ENCODE measurements at regions of chrX and their contacts with region 1.

Region 1: DNA sequence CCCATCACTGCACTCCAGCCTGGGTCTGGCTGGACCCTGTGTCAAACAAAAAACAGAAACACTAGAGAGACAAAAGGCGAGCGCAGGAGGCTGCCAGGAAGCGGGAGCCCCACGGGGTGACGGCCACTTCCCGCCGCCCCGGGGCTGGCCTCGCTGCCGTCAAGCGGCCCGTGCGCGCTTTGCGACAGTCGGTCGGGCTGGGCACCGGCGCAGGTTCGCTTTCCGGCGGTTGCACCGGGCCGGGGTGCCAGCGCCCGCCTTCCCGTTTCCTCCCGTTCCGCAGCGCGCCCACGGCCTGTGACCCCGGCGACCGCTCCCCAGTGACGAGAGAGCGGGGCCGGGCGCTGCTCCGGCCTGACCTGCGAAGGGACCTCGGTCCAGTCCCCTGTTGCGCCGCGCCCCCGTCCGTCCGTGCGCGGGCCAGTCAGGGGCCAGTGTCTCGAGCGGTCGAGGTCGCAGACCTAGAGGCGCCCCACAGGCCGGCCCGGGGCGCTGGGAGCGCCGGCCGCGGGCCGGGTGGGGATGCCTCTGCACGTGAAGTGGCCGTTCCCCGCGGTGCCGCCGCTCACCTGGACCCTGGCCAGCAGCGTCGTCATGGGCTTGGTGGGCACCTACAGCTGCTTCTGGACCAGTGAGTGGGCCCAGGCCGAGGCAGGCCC is at the start of gene TAFAZZIN:
- H3K4me3 ChIP-seq: peak within 1 kb of the TSS; percentile 57
- H3K27ac ChIP-seq: peak within 1 kb of the TSS; percentile 92
- H3K4me1 ChIP-seq: no peaks in the 10 kb centered on the region; the same call in 1 of the 2 replicates
- CTCF ChIP-seq: no peak; the same call in 1 of the 2 replicates

Region 2: GRCh38 chrX:153924149-153924861 is 487.1 kb before region 1 on chrX:
- CTCF ChIA-PET with region 1: no interaction called
- POLR2A ChIA-PET with region 1: no interaction called
- H3K4me3 ChIP-seq: no peak overlapping the region
- H3K27ac ChIP-seq: no peak overlapping the region
- H3K4me1 ChIP-seq: peaks cover 9% of the 10 kb centered on the region
- CTCF ChIP-seq: peak; percentile 80

Region 3: DNA sequence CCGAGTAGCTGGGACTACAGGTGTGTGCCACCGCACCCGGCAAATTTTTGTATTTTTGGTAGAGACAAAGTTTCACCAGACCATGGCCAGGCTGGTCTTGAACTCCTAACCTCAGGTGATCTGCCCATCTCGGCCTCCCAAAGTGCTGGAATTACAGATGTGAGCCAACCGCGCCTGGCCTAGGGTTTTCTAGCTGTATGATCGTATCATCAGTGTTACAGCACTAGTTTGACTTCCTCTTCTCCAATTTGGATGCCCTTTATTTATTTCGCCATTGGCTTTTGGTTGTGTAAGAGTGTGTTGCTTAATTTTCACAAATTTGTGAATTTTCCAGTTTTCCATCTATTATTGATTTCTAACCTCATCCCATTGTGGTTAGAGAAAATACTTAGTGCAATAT is 110.6 kb before region 1 on chrX:
- CTCF ChIA-PET with region 1: no interaction called
- POLR2A ChIA-PET with region 1: no interaction called
- H3K4me3 ChIP-seq: no peak overlapping the region
- H3K27ac ChIP-seq: no peak overlapping the region
- H3K4me1 ChIP-seq: no peaks in the 10 kb centered on the region
- CTCF ChIP-seq: no peak

Region 4: GRCh38 chrX:154443992-154444754 is 32.7 kb after region 1 on chrX and contains the start of gene FAM50A:
- CTCF ChIA-PET with region 1: interaction called, 4 read pairs
- POLR2A ChIA-PET with region 1: interaction called, 13 read pairs
- H3K4me3 ChIP-seq: peak within 1 kb of the TSS; percentile 51
- H3K27ac ChIP-seq: peak within 1 kb of the TSS; percentile 77
- H3K4me1 ChIP-seq: no peaks in the 10 kb centered on the region
- CTCF ChIP-seq: no peak

Region 5: GRCh38 chrX:154458114-154458953 is 46.9 kb after region 1 on chrX and contains the start of gene PLXNA3:
- CTCF ChIA-PET with region 1: no interaction called
- POLR2A ChIA-PET with region 1: no interaction called
- H3K4me3 ChIP-seq: peak within 1 kb of the TSS; percentile 70
- H3K27ac ChIP-seq: peak within 1 kb of the TSS; percentile 75
- H3K4me1 ChIP-seq: no peaks in the 10 kb centered on the region
- CTCF ChIP-seq: no peak